ENCODE measurements at regions of chr19 and their contacts with region 1.

Region 1: DNA sequence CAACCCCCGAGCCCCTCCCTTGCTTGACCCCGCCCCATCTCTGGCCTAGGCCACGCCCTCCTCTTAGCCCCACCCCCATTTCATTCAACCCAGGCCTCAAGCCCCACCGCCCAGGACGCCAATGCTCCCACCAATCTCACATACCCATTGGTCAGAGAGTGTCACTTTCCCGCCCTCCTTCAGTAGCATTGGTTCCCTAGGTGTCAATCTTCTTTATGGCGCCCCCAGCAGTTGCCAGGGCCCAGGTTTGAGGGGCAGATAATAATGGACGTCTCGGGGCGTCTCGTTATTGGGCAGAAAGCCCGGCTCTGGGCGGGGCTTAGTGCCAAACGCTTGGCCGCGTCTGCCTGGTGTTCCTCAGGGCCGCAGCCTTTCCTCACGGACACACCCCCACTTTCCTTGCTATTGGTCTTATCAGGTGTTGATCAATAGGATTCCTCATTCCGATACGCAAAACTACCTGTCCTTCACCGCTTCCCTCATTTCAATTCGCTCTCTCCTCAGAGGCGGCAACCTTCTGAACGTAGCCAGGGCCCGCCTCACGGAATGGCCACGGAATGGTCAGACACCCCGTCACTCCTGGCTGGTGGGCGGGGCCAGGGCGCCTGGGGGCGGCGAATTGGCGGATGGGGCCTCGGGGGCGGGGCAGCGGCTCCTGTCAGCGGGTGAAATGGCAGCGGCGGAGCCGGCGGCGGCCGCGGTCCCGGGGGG is at the start of gene EVI5L:
- DNase-seq: peak; percentile 100
- ATAC-seq: peak; percentile 91
- H3K4me3 Mint-ChIP-seq: peak within 1 kb of the TSS; percentile 83
- H3K27ac Mint-ChIP-seq: peak within 1 kb of the TSS; percentile 94
- H3K4me1 Mint-ChIP-seq: peaks cover 14% of the 10 kb centered on the region
- H3K27me3 Mint-ChIP-seq: peaks cover 2% of the 10 kb centered on the region
- total RNA-seq, gene EVI5L: 4.8 to 5.9 TPM

Region 2: GRCh38 chr19:7098701-7099596 is 730.8 kb before region 1 on chr19:
- CTCF ChIA-PET with region 1: no interaction called
- POLR2A ChIA-PET with region 1: no interaction called
- intact Hi-C with region 1: loop called in 1 of 2 experiments (anchors 1 kb)
- DNase-seq: peak; percentile 94
- ATAC-seq: peak; percentile 95
- H3K4me3 Mint-ChIP-seq: peak overlapping the region; percentile 90
- H3K27ac Mint-ChIP-seq: peak overlapping the region; percentile 92
- H3K4me1 Mint-ChIP-seq: peaks cover 27% of the 10 kb centered on the region
- H3K27me3 Mint-ChIP-seq: no peaks in the 10 kb centered on the region

Region 3: GRCh38 chr19:7471696-7472615 is 357.8 kb before region 1 on chr19:
- CTCF ChIA-PET with region 1: no interaction called
- POLR2A ChIA-PET with region 1: no interaction called
- intact Hi-C with region 1: no loop called
- DNase-seq: no peak
- ATAC-seq: no peak
- H3K4me3 Mint-ChIP-seq: no peak overlapping the region
- H3K27ac Mint-ChIP-seq: no peak overlapping the region
- H3K4me1 Mint-ChIP-seq: no peaks in the 10 kb centered on the region
- H3K27me3 Mint-ChIP-seq: no peaks in the 10 kb centered on the region

Region 4: GRCh38 chr19:7535035-7535992 is 294.4 kb before region 1 on chr19 and contains the start of gene PNPLA6:
- CTCF ChIA-PET with region 1: no interaction called
- POLR2A ChIA-PET with region 1: no interaction called
- intact Hi-C with region 1: loop called in 1 of 2 experiments (anchors 1 kb)
- DNase-seq: peak; percentile 97
- ATAC-seq: peak; percentile 80
- H3K4me3 Mint-ChIP-seq: peak within 1 kb of the TSS; percentile 91
- H3K27ac Mint-ChIP-seq: peak within 1 kb of the TSS; percentile 84
- H3K4me1 Mint-ChIP-seq: peaks cover 20% of the 10 kb centered on the region
- H3K27me3 Mint-ChIP-seq: no peaks in the 10 kb centered on the region
- total RNA-seq, gene PNPLA6: 82.2 to 108 TPM

Region 5: GRCh38 chr19:7636691-7637373 is 192.9 kb before region 1 on chr19 and contains the start of gene STXBP2:
- CTCF ChIA-PET with region 1: no interaction called
- POLR2A ChIA-PET with region 1: no interaction called
- intact Hi-C with region 1: loop called in 1 of 2 experiments (anchors 1 kb)
- DNase-seq: peak; percentile 96
- ATAC-seq: peak; percentile 97
- H3K4me3 Mint-ChIP-seq: peak within 1 kb of the TSS; percentile 78
- H3K27ac Mint-ChIP-seq: peak within 1 kb of the TSS; percentile 86
- H3K4me1 Mint-ChIP-seq: peaks cover 22% of the 10 kb centered on the region
- H3K27me3 Mint-ChIP-seq: no peaks in the 10 kb centered on the region
- total RNA-seq, gene STXBP2: 75.2 to 83.0 TPM

Region 6: DNA sequence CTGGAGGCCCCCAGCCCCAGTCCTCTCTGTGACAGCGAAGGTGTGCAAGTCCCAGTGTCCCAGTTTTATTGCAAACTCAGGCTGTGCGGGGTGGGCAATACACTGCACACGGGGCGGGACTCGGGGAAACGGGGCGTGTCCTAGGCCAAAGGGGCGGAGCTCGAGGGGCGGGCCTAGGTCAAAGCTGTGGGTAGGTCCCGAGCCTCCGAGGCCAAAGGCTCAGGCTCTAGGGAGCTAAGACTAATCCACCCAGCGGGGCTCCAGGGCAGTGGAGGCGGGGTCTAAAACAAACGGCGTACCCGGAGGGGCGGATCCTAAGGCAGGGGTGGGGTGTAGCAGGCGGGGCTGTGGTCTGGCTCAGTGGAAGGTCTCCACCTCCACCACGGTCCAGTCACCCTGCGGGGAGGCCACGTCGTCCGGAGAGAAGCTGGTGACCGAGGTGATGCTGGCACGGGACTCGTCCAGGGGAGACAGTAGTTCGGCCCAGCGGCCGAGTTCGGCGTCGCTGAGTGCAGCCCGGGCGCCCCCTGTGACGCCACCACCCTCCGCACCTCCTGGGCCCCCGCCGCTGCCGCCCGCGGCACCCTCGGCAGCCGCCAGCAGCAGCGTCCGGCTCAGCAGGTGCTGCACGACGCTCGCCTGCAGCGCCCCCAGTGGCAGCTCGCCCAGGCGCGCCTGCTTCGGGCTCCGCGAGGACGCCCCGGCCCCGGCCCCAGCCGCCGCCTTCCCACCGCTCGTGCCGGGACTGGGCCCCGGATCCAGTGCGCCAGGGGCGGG is 39.1 kb after region 1 on chr19:
- CTCF ChIA-PET with region 1: interaction called, 5 read pairs
- POLR2A ChIA-PET with region 1: no interaction called
- intact Hi-C with region 1: loop called (anchors 1 to 2 kb)
- DNase-seq: peak; percentile 92
- ATAC-seq: peak; percentile 75
- H3K4me3 Mint-ChIP-seq: peak overlapping the region; percentile 70
- H3K27ac Mint-ChIP-seq: peak overlapping the region; percentile 51
- H3K4me1 Mint-ChIP-seq: peaks cover 47% of the 10 kb centered on the region
- H3K27me3 Mint-ChIP-seq: peaks cover 29% of the 10 kb centered on the region

Region 7: DNA sequence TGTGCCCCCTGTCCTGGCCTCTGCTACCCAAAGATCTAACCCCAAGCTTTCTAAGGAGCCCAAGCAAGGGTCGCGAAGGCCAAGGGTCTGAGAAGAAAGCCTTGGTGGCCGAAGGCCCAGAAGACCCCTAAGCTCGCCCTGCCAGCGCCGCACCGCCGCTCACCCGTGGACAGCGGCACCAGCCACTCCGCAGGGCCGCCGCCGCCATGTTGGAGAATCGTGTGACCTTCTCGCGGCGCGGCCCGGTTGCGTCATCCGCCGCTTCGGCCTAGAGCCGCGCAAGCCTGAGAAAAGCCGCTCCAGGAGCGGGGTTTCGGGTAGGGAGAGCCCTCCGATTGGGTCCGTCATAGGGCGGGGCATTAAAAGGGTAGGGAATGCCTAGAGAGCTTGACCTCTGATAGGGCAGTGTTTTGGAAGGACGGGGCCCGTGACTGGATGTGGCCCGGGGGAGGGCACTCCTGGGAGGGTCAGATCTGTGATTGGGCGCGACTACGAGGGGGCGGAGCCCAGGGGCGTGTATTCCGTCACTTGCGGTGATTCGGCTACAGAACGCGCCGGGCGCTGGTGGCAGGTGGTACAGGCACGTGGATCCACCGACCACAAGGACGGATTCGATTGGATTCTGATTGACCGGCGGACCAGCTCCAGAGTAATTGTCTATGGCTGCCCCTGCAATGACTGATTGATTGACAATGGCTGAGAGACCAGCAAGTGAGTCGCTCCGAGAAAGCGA is 113.9 kb after region 1 on chr19 and contains the start of gene TIMM44:
- CTCF ChIA-PET with region 1: interaction called, 4 read pairs
- POLR2A ChIA-PET with region 1: no interaction called
- intact Hi-C with region 1: loop called in 1 of 2 experiments (anchors 1 kb)
- DNase-seq: peak; percentile 99
- ATAC-seq: peak; percentile 99
- H3K4me3 Mint-ChIP-seq: peak within 1 kb of the TSS; percentile 90
- H3K27ac Mint-ChIP-seq: peak within 1 kb of the TSS; percentile 90
- H3K4me1 Mint-ChIP-seq: peaks cover 30% of the 10 kb centered on the region
- H3K27me3 Mint-ChIP-seq: no peaks in the 10 kb centered on the region
- total RNA-seq, gene TIMM44: 80.4 to 84.0 TPM

Region 8: GRCh38 chr19:8224394-8225145 is 394.9 kb after region 1 on chr19:
- CTCF ChIA-PET with region 1: no interaction called
- POLR2A ChIA-PET with region 1: no interaction called
- intact Hi-C with region 1: no loop called
- DNase-seq: no peak
- ATAC-seq: no peak
- H3K4me3 Mint-ChIP-seq: no peak overlapping the region
- H3K27ac Mint-ChIP-seq: no peak overlapping the region
- H3K4me1 Mint-ChIP-seq: peaks cover 4% of the 10 kb centered on the region
- H3K27me3 Mint-ChIP-seq: no peaks in the 10 kb centered on the region

Region 9: GRCh38 chr19:8494158-8494557 is 664.4 kb after region 1 on chr19:
- CTCF ChIA-PET with region 1: no interaction called
- POLR2A ChIA-PET with region 1: no interaction called
- intact Hi-C with region 1: no loop called
- DNase-seq: peak; percentile 42
- ATAC-seq: peak; percentile 72
- H3K4me3 Mint-ChIP-seq: no peak overlapping the region
- H3K27ac Mint-ChIP-seq: peak overlapping the region; percentile 61
- H3K4me1 Mint-ChIP-seq: peaks cover 11% of the 10 kb centered on the region
- H3K27me3 Mint-ChIP-seq: no peaks in the 10 kb centered on the region